Ascending aorta (tissue), 2 donors: ENCODE measurements at regions of chr2 and their contacts with region 1.

Region 1: DNA sequence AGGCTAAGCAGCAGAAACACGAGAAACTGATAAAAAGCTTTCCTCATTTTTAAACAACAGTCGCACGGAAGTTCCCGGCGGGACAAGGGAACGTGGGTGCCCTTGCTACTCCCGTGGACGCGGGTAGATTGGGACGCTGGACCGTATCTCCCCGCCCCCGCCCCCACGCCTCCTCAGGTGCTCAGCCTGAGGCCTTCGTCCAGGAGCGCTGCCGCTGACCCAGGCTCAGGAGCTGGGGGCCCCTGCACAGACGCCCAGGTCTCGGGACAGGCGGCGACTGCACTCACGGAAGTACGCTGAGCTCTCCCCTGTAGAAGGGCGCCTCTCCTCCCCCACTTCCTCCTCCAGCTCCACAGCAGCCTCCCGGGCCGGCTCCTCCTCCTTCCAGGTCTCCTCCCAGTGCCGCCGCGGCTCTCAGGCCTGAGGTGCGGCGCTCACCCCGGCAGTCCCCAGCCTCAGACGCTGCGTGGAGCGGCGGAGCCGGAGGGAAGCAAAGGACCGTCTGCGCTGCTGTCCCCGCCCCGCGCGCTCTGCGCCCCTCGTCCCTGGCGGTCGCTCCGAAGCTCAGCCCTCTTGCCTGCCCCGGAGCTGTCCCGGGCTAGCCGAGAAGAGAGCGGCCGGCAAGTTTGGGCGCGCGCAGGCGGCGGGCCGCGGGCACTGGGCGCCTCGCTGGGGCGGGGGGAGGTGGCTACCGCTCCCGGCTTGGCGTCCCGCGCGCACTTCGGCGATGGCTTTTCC is at the start of gene ITGAV:
- DNase-seq: peak; percentile 80 to 96
- H3K4me3 ChIP-seq: peak within 1 kb of the TSS; percentile 78 to 97
- H3K27ac ChIP-seq: peak within 1 kb of the TSS; percentile 94 to 99
- H3K4me1 ChIP-seq: peaks cover 0 to 23% of the 10 kb centered on the region in 2 donors
- H3K27me3 ChIP-seq: no peaks in the 10 kb centered on the region
- CTCF ChIP-seq: peak in 1 of 3 experiments; percentile 17
- total RNA-seq, gene ITGAV: 115 TPM

Region 2: GRCh38 chr2:186575302-186575701 is 14.5 kb before region 1 on chr2:
- intact Hi-C with region 1: loop called (anchors 1 kb)
- DNase-seq: peak; percentile 58 to 86
- H3K4me3 ChIP-seq: no peak overlapping the region
- H3K27ac ChIP-seq: peak overlapping the region; percentile 59 to 80
- H3K4me1 ChIP-seq: peaks cover 10 to 23% of the 10 kb centered on the region in 2 donors
- H3K27me3 ChIP-seq: no peaks in the 10 kb centered on the region
- CTCF ChIP-seq: no peak

Region 3: DNA sequence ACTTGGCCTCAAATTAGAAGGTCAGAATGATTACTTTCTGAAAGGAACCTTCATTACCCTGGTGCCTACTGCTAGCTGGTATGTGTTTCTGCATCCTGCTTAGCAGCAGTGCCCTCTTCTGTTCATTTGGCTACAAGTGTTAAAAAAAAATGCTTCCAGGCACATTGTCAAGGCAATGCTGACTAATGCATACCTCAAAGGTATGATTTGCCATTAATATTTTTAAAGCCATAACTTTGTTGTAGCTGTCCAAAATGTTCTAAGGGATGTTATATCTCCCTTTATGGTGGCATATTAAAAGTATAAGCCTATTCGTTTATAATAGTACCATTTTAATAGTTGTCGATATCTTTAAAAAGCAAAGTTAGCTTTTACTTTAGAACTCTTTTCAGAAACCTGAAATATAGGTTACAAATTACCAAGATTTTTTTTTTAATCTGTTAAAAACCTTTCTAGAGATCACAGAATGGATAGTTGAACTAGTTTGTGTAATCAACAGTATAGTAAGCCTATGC is 52.1 kb after region 1 on chr2:
- intact Hi-C with region 1: loop called (anchors 5 kb)
- DNase-seq: no peak
- H3K4me3 ChIP-seq: no peak overlapping the region
- H3K27ac ChIP-seq: peak overlapping the region; percentile 8 to 24
- H3K4me1 ChIP-seq: no peaks in the 10 kb centered on the region
- H3K27me3 ChIP-seq: no peaks in the 10 kb centered on the region
- CTCF ChIP-seq: peak; percentile 63 to 81 (median 68)